HepG2 (cell line): ENCODE measurements at regions of chr3 and their contacts with region 1.

Region 1: DNA sequence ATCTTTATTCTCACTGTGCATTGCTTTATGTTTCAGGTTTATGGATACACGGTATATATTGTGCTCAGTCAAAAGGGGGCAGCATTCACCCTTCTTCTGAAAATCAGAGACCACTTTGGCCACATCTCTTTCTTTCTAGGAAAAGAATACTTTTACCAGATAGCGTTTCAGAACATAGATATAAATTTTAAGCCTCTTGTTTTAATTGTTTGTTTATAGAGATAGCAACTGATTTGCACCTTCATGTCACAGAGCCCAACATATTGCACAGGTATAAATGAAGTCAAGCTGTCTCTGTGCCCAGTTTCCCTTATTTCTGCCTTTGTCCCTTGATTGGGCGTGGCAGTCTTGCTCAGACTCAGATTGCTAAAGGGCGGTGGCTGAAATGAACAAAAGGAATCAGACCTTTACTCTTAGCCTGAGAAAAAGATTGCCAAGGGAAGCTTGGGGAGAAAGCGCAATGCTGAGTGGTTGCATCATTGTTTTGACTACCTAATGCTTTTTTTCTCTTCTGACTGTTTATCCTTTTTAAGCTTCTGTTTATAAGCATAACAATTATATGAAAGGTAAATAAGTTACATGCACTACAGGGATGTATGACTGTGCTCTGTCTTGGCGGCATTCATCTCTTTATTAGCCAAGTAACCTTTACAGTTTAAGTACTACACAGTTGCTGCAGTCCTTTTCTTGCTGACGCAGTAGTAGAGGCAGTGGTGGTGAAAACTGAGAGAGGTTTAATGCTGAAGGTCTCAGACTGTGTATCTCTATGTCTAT is 70.8 kb upstream of the ZBTB20 start:
- DNase-seq: peak; percentile 32
- ATAC-seq: peak; percentile 82
- H3K4me3 ChIP-seq: no peak overlapping the region
- H3K27ac ChIP-seq: no peak overlapping the region
- H3K4me1 ChIP-seq: peaks cover 15% of the 10 kb centered on the region
- H3K27me3 ChIP-seq: no peaks in the 10 kb centered on the region
- CTCF ChIP-seq: peak; percentile 71
- EP300 ChIP-seq: no peak
- POLR2A ChIP-seq: no peak
- RAD21 ChIP-seq: 0 out of 2 replicates have a peak, but pooled peaks have one; percentile 31

Region 2: GRCh38 chr3:114727373-114727772 is 490.5 kb before region 1 on chr3:
- CTCF ChIA-PET with region 1: no interaction called
- POLR2A ChIA-PET with region 1: no interaction called
- in situ Hi-C with region 1: no loop called
- intact Hi-C with region 1: no loop called
- DNase-seq: no peak
- ATAC-seq: no peak
- H3K4me3 ChIP-seq: no peak overlapping the region
- H3K27ac ChIP-seq: no peak overlapping the region
- H3K4me1 ChIP-seq: peaks cover 21% of the 10 kb centered on the region
- H3K27me3 ChIP-seq: no peaks in the 10 kb centered on the region
- CTCF ChIP-seq: no peak
- EP300 ChIP-seq: no peak
- POLR2A ChIP-seq: no peak
- RAD21 ChIP-seq: no peak

Region 3: DNA sequence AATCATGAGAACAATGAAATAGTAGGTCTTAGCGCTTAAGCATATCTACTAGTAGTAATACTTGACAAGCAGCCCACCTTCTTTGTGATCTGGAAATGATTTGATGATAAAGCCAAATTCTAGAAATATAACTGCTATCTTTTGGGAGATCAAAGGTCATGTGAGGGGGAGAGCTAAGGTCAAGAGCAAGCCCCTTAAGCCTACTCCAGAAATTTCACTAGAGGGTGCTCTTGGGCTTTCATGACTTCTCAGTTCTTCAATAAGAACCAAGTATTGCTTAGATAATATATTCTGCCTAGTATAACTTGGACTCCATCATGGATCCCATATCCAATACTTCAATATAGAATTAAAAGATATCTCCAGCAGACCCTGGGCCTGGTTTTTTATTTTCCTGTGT is 390.4 kb before region 1 on chr3:
- CTCF ChIA-PET with region 1: no interaction called
- POLR2A ChIA-PET with region 1: no interaction called
- in situ Hi-C with region 1: no loop called
- intact Hi-C with region 1: loop called (anchors 1 kb)
- DNase-seq: peak; percentile 66
- ATAC-seq: peak; percentile 89
- H3K4me3 ChIP-seq: no peak overlapping the region
- H3K27ac ChIP-seq: no peak overlapping the region
- H3K4me1 ChIP-seq: no peaks in the 10 kb centered on the region
- H3K27me3 ChIP-seq: no peaks in the 10 kb centered on the region
- CTCF ChIP-seq: peak; percentile 68
- EP300 ChIP-seq: no peak
- POLR2A ChIP-seq: no peak
- RAD21 ChIP-seq: peak; percentile 62

Region 4: DNA sequence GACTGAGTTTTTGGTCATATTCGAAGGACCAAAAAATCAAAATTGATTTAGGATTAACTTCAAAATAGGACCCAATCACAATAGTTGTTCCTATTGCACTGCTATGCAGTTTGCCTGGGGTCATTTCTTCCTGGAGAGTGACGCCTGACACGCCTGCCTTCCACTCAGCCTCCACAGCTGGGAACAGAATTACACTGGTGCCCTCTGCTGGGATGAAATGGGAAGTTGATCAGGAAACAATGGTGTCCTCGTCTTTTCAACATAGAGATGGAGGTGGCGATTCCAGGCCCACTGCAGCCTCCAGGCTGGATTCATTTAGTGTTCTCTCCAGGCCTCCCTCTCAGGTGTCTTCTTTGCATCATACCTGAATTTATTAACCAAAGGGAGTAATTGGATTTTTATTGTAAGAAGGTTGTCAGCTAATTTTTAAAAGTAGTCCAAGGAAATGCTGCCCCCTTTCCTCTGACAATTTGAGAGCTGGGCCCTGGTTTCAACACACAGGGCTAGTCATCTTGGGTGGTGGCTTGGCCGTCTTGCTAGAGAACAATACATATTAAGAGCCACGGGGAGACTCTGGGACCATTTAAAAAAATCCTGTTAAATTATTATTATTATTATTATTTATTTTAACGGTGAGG is 475.1 kb after region 1 on chr3:
- CTCF ChIA-PET with region 1: interaction called, 9 read pairs
- POLR2A ChIA-PET with region 1: no interaction called
- in situ Hi-C with region 1: loop called (anchors 5 kb)
- intact Hi-C with region 1: loop called (anchors 1 kb)
- DNase-seq: peak; percentile 67
- ATAC-seq: peak; percentile 99
- H3K4me3 ChIP-seq: no peak overlapping the region
- H3K27ac ChIP-seq: no peak overlapping the region
- H3K4me1 ChIP-seq: no peaks in the 10 kb centered on the region
- H3K27me3 ChIP-seq: no peaks in the 10 kb centered on the region
- CTCF ChIP-seq: peak; percentile 93
- EP300 ChIP-seq: no peak
- POLR2A ChIP-seq: no peak
- RAD21 ChIP-seq: peak; percentile 85

Region 5: GRCh38 chr3:115814778-115815380 is 597.0 kb after region 1 on chr3:
- CTCF ChIA-PET with region 1: interaction called, 6 read pairs
- POLR2A ChIA-PET with region 1: no interaction called
- in situ Hi-C with region 1: loop called (anchors 5 kb)
- intact Hi-C with region 1: loop called (anchors 1 kb)
- DNase-seq: peak; percentile 70
- ATAC-seq: peak; percentile 92
- H3K4me3 ChIP-seq: peak overlapping the region in 1 of 3 experiments; percentile 6; a peak in 1 of 6 replicates
- H3K27ac ChIP-seq: no peak overlapping the region
- H3K4me1 ChIP-seq: peaks cover 24% of the 10 kb centered on the region
- H3K27me3 ChIP-seq: no peaks in the 10 kb centered on the region
- CTCF ChIP-seq: peak; percentile 89
- EP300 ChIP-seq: no peak
- POLR2A ChIP-seq: no peak
- RAD21 ChIP-seq: peak; percentile 73

Region 6: DNA sequence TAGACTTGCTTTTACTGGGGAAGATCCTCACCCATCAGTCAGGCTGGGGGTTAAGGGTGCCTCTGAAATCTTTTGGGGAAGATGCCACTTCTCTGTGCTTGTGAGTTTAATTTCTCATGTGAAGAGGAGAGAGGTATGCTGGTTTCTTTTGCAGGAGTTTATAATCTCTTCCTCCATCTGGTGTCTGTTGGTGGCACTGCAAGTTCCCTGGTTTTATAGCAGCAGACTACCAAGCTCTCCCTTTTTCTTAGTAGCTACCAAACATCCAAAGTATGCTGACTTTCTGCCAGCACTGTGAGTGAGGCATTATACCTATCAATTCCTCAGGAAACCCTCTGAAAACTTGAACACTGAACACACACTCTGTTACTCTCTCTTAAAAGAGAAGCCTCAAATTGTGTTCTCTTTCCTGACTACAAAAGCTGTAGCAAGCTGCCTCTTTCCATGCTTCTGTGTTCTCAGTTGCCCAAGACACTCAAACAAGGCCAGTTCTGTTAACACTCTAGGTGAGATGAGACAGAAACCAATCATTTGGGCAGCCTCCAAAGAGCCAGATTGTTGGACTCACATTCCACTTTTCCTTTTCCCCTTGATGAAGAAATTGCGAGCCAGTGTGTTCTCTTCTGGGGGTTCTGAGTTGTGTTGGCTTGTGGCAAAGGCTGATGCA is 704.9 kb after region 1 on chr3:
- CTCF ChIA-PET with region 1: no interaction called
- POLR2A ChIA-PET with region 1: no interaction called
- in situ Hi-C with region 1: no loop called
- intact Hi-C with region 1: loop called (anchors 10 kb)
- DNase-seq: peak; percentile 10
- ATAC-seq: peak; percentile 87
- H3K4me3 ChIP-seq: no peak overlapping the region
- H3K27ac ChIP-seq: no peak overlapping the region
- H3K4me1 ChIP-seq: no peaks in the 10 kb centered on the region
- H3K27me3 ChIP-seq: no peaks in the 10 kb centered on the region; a peak in 1 of 5 replicates
- CTCF ChIP-seq: peak; percentile 59
- EP300 ChIP-seq: no peak
- POLR2A ChIP-seq: no peak
- RAD21 ChIP-seq: no peak